Thyroid gland (tissue), 4 donors: ENCODE measurements at regions of chr5 and their contacts with region 1.

Region 1: GRCh38 chr5:134041570-134042411 is 37.0 kb upstream of the VDAC1 start:
- DNase-seq: no peak
- H3K4me3 ChIP-seq: no peak overlapping the region
- H3K27ac ChIP-seq: no peak overlapping the region
- H3K4me1 ChIP-seq: no peaks in the 10 kb centered on the region
- H3K27me3 ChIP-seq: no peaks in the 10 kb centered on the region
- CTCF ChIP-seq: no peak
- POLR2A ChIP-seq: no peak

Region 2: DNA sequence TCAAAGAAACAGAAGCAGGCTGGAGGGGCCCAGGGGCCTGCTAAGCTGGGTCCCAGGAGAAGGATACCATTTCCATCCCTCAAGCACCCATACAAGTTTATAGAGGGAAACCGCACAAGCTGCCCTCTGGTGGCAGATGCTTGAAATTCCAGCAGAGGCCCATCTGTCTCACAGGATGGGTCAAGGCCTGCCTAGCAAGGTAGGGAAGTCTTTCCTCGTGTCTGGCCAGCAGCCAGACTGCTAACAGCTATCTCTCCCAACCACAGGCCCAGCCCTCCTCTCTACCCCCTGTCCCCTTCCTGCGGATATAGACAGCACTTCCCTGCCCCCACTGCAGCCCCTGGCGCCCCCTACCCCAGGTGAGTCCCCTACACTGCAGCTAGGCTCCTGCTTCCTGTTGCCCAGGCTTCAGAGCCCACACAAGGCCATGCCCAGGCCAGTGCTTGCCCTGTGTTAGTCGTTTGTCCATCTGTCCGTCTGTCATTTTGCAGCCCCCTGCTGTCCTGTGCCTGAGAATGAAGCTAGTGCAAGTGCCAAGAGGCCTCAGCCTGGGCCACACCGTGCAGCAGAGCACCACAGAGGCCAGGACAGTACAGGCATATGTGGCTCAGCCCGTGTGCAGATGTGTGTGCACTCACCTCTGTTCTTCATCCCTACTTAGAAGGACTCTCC is 98.9 kb after region 1 on chr5:
- intact Hi-C with region 1: loop called (anchors 5 kb)
- DNase-seq: peak; percentile 75 to 77
- H3K4me3 ChIP-seq: no peak overlapping the region
- H3K27ac ChIP-seq: no peak overlapping the region
- H3K4me1 ChIP-seq: no peaks in the 10 kb centered on the region
- H3K27me3 ChIP-seq: no peaks in the 10 kb centered on the region
- CTCF ChIP-seq: peak; percentile 47 to 79 (median 70)
- POLR2A ChIP-seq: no peak

Region 3: GRCh38 chr5:134289509-134290113 is 247.8 kb after region 1 on chr5:
- intact Hi-C with region 1: loop called (anchors 10 kb)
- DNase-seq: peak; percentile 45 to 53
- H3K4me3 ChIP-seq: no peak overlapping the region
- H3K27ac ChIP-seq: no peak overlapping the region
- H3K4me1 ChIP-seq: no peaks in the 10 kb centered on the region
- H3K27me3 ChIP-seq: no peaks in the 10 kb centered on the region
- CTCF ChIP-seq: peak; percentile 27 to 92 (median 72)
- POLR2A ChIP-seq: no peak